A673 (cell line): ENCODE measurements at regions of chr20 and their contacts with region 1.

Region 1: DNA sequence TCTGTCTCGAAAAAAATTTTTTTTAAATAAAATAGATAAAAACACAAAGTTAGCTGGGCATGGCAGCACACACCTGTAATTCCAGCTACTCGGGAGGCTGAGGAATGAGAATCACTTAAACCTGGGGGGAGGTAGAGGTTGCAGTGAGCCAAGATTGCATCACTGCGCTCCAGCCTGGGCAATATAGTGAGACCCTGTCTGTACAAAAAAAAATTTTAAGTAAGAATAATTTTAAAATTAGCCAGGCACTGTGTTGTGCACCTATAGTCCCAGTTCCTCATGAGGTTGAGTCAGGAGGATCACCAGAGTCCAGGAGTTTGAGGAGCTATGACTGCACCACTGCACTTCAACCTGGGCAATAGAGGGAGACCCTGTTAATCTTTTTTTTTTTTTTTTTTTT is 149.2 kb upstream of the SHLD1 start:
- DNase-seq: no peak
- H3K4me3 ChIP-seq: no peak overlapping the region
- H3K27ac ChIP-seq: no peak overlapping the region
- H3K4me1 ChIP-seq: peaks cover 3% of the 10 kb centered on the region
- H3K27me3 ChIP-seq: no peaks in the 10 kb centered on the region
- CTCF ChIP-seq: no peak

Region 2: GRCh38 chr20:4924032-4924431 is 677.0 kb before region 1 on chr20:
- CTCF ChIA-PET with region 1: no interaction called
- POLR2A ChIA-PET with region 1: interaction called, 18 read pairs
- intact Hi-C with region 1: no loop called
- DNase-seq: no peak
- H3K4me3 ChIP-seq: no peak overlapping the region
- H3K27ac ChIP-seq: no peak overlapping the region
- H3K4me1 ChIP-seq: peaks cover 9% of the 10 kb centered on the region
- H3K27me3 ChIP-seq: no peaks in the 10 kb centered on the region
- CTCF ChIP-seq: no peak

Region 3: GRCh38 chr20:5353624-5354496 is 247.1 kb before region 1 on chr20:
- CTCF ChIA-PET with region 1: no interaction called
- POLR2A ChIA-PET with region 1: no interaction called
- intact Hi-C with region 1: no loop called
- DNase-seq: peak; percentile 81
- H3K4me3 ChIP-seq: no peak overlapping the region
- H3K27ac ChIP-seq: no peak overlapping the region
- H3K4me1 ChIP-seq: peaks cover 5% of the 10 kb centered on the region
- H3K27me3 ChIP-seq: no peaks in the 10 kb centered on the region
- CTCF ChIP-seq: no peak

Region 4: GRCh38 chr20:5749952-5750779 is 149.2 kb after region 1 on chr20 and contains the start of gene SHLD1:
- CTCF ChIA-PET with region 1: no interaction called
- POLR2A ChIA-PET with region 1: no interaction called
- intact Hi-C with region 1: no loop called
- DNase-seq: peak; percentile 94
- H3K4me3 ChIP-seq: peak within 1 kb of the TSS; percentile 55
- H3K27ac ChIP-seq: peak within 1 kb of the TSS; percentile 73
- H3K4me1 ChIP-seq: no peaks in the 10 kb centered on the region
- H3K27me3 ChIP-seq: no peaks in the 10 kb centered on the region
- CTCF ChIP-seq: no peak
- total RNA-seq, gene SHLD1: 5.8 and 7.1 TPM in 2 replicates

Region 5: DNA sequence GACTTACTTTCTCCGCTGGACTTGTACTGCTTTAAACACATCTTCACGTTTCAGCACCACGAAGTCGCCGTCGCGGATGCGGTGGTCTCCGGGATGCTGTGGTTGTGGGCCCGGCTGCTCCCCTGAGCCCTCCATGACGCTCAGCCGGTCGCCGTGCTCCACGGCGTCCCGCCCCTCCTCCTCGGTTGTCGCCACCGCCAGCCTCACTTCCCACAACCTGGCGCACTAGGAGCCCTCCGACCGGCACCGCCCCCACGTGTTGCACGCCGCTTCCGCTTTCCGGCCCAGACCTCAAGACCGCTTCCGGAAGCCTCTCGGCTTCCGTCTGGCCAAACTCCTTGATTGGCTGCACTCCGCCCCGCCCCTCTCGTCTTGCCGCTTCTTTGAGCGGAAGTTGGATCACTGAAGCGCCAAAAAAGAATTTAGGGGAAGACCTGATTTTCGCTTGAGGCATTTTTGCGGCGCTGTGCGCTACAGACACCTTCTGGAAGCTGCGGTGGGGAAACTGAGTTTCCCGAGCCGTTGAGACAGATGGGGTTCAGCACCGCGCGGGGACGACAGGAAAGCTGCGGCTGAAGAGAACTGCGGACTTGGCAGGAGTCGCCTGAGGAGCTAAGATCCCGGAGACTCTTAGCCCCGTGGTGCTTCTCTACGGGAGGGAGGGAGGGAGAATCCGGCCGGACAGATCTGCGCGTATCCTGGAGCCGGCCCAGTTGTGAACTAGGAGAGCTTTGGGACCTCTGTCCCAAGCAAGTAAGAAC is 349.5 kb after region 1 on chr20 and contains the starts of genes MCM8 and TRMT6:
- CTCF ChIA-PET with region 1: no interaction called
- POLR2A ChIA-PET with region 1: no interaction called
- intact Hi-C with region 1: no loop called
- DNase-seq: peak; percentile 99
- H3K4me3 ChIP-seq: peak within 1 kb of the TSS; percentile 74
- H3K27ac ChIP-seq: peak within 1 kb of the TSS; percentile 85
- H3K4me1 ChIP-seq: peaks cover 15% of the 10 kb centered on the region
- H3K27me3 ChIP-seq: no peaks in the 10 kb centered on the region
- CTCF ChIP-seq: no peak
- total RNA-seq, gene MCM8: 49.7 and 56.4 TPM in 2 replicates
- total RNA-seq, gene TRMT6: 38.6 and 41.6 TPM in 2 replicates